ENCODE measurements at regions of chr6 and their contacts with region 1.

Region 1: GRCh38 chr6:4055420-4056041 is 23.4 kb downstream of the FAM217A start:
- DNase-seq: no peak
- ATAC-seq: peak; percentile 84

Region 2: GRCh38 chr6:4153514-4153985 is 98.0 kb after region 1 on chr6:
- intact Hi-C with region 1: loop called in 1 of 2 experiments (anchors 5 kb)
- DNase-seq: no peak
- ATAC-seq: no peak

Region 3: GRCh38 chr6:4270776-4271175 is 215.2 kb after region 1 on chr6:
- intact Hi-C with region 1: no loop called
- DNase-seq: no peak
- ATAC-seq: no peak

Region 4: DNA sequence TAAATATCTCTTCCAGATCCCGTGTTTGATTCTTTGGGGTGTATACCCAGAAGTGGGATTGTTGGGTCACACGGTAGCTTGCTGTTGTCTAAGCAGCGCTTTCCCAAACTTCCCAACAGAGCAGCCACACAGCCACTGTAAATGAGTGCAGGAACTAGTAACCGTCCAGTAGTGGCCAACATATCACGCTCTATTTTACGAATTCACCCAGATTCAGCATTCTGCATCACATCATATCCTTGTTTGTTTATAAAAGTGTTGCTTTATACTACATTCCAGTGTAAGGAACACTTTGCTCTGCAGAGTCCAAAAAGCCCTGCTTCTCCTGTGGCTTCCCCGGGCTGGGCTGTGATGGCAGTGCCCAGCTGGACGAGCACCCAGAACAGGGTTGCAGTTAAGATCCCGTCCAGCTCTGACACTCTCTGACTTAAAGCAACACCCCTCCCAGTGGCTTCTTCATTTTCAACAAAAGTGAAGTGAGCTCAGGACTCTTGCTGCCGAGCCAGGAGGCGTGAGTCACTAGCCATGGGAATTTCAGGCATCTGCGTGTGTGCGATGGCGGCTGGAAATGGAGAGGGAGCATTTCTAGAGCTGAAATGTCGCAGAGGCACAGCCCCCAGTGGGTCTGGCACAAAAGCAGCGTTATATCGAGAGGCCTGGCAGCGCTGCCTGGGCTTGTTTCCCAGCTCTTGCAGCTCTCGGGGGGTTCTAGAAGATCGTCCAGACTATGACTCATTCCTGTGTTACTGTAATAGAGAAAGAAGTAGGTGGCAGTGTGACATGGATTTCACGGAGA is 296.2 kb after region 1 on chr6:
- intact Hi-C with region 1: no loop called
- DNase-seq: peak; percentile 18 to 50
- ATAC-seq: peak; percentile 32

Region 5: DNA sequence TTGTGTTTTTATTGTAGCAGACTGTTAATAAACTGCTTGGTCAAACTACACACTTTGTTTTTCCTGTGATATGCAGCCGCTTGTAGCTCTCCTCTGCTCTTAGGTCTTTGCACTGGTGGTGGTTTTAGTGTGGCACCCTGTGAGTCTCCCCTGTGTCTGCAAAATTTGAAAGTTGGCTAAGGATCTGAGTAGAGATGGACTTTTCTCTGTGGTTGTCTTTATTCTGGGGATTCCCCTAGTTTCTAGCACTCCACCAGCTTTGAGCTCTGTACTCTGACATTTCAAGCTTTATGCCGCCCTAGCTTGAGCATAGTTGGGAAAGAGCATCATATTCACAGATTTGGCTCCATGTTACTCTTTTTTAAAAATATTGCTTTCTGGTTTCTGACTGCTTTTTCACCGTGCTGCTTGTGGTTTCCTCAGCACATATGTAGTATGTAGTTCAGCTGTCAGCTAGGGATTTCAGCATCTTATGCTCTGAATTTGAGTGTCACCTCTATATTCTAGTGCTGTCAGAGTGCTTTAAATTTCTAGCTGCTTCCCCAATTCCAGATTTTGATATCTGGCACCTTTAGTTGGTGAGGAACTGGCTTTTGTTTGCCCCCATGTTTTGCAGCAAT is 746.1 kb after region 1 on chr6:
- intact Hi-C with region 1: no loop called
- DNase-seq: no peak
- ATAC-seq: peak; percentile 24